OCI-LY7 (cell line): ENCODE measurements at regions of chr18 and their contacts with region 1.

Region 1: DNA sequence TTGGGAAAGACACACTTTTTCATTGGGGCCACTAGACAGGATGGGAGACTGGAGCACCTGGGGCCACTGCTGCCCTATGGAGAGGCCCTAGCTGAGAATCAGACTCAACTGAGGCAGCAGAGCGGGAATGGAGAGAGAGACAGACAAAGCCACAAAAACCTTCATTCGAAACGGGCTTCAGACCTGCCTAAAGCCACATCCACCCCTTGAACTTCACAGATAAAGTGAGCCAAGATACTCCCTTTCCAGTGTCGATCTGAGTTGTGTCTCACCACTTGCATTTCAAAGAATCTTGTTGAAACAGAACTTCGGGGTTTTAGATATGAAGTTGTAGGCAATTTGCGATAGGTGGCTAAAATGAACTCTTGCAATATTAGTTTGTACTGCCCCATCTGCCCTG is 11.3 kb upstream of the LDLRAD4 start:
- DNase-seq: no peak
- H3K4me3 ChIP-seq: no peak overlapping the region
- H3K27ac ChIP-seq: no peak overlapping the region
- H3K4me1 ChIP-seq: no peaks in the 10 kb centered on the region
- CTCF ChIP-seq: no peak

Region 2: DNA sequence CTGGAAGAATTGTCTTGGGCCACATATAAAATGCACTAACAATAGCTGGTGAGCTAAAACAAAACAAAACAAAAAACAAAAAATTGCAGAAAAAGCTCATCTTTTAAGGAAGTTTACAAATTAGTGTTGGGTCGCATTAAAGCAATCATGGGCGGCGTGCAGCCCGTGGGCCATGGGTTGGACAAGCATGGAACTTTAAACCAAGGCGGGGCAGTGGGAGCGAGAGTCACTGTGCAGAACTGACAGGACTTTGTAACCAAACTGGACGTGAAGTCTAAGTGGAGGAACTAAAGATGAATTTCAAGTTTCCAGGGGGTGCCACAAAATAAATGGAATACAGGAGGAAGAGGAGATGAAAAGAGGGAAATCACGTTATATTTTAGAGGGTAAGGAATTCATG is 423.8 kb before region 1 on chr18:
- CTCF ChIA-PET with region 1: no interaction called
- POLR2A ChIA-PET with region 1: no interaction called
- intact Hi-C with region 1: no loop called
- DNase-seq: no peak
- H3K4me3 ChIP-seq: no peak overlapping the region
- H3K27ac ChIP-seq: no peak overlapping the region
- H3K4me1 ChIP-seq: no peaks in the 10 kb centered on the region
- CTCF ChIP-seq: no peak

Region 3: DNA sequence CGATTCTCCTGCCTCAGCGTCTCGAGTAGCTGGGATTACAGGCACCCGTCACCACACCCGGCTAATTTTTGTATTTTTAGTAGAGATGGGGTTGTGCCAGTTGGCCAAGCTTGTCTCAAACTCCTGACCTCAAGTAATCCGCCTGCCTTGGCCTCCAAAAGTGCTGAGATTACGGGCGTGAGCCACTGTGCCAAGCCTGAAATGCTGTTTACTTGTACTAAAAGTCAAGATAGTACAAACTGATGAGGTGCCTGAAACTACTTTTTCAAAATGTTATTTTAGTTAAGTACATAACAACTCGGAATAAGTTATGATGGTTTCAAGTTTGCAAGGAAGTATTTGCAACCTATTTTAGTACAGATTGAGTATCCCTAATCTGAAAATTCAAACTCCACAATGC is 130.4 kb before region 1 on chr18:
- CTCF ChIA-PET with region 1: no interaction called
- POLR2A ChIA-PET with region 1: no interaction called
- intact Hi-C with region 1: no loop called
- DNase-seq: no peak
- H3K4me3 ChIP-seq: no peak overlapping the region
- H3K27ac ChIP-seq: no peak overlapping the region
- H3K4me1 ChIP-seq: no peaks in the 10 kb centered on the region
- CTCF ChIP-seq: no peak

Region 4: DNA sequence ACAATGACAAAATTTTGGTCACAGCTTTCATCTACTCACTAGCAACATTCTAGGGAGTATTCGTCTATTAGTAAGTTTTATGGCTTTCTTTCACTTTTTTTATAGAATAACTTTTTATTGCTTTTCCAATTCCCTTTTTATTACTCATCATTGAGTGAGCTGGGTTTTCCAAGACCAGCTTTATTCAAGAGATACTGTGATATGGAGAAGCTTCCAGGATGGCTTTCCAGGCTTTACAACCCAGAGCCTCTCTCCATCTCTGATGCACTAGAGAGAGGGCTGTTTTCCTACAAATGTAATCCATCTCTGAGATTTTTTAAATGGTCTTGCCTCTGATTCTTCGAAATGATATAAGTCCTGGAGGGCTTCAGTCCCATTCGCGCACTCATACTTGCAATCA is 129.5 kb after region 1 on chr18:
- CTCF ChIA-PET with region 1: no interaction called
- POLR2A ChIA-PET with region 1: interaction called, 3 read pairs
- intact Hi-C with region 1: loop called (anchors 10 kb)
- DNase-seq: no peak
- H3K4me3 ChIP-seq: no peak overlapping the region
- H3K27ac ChIP-seq: no peak overlapping the region
- H3K4me1 ChIP-seq: no peaks in the 10 kb centered on the region
- CTCF ChIP-seq: no peak